Endothelial cell of umbilical vein (primary cell): ENCODE measurements at regions of chr2 and their contacts with region 1.

Region 1: GRCh38 chr2:78676921-78677696 is 348.4 kb upstream of the REG3G start:
- DNase-seq: no peak
- H3K4me3 ChIP-seq: no peak overlapping the region
- H3K27ac ChIP-seq: no peak overlapping the region
- H3K4me1 ChIP-seq: no peaks in the 10 kb centered on the region
- H3K27me3 ChIP-seq: no peaks in the 10 kb centered on the region
- CTCF ChIP-seq: no peak
- POLR2A ChIP-seq: no peak

Region 2: DNA sequence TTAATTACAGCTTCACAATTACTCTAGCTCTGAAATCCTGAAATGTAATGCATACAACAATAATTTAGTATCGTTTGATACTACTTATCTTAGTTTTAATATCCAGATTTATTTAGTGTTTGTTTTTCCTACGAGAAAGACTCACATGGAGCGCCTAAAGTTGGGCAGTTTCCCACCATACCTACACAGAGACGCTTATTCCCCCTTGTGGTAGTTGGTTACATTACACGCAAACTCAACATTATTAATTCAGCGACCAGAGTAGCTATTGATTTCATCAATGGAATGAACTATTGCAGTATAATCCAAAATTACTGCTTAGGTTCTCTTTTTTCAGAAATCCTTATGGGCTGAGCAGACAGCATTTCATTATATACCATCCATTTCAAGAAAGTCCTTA is 184.4 kb after region 1 on chr2:
- CTCF ChIA-PET with region 1: interaction called, 10 read pairs
- POLR2A ChIA-PET with region 1: no interaction called
- dilution Hi-C with region 1: no loop called
- intact Hi-C with region 1: loop called (anchors 1 kb)
- DNase-seq: peak; percentile 33
- H3K4me3 ChIP-seq: no peak overlapping the region
- H3K27ac ChIP-seq: no peak overlapping the region
- H3K4me1 ChIP-seq: no peaks in the 10 kb centered on the region
- H3K27me3 ChIP-seq: no peaks in the 10 kb centered on the region
- CTCF ChIP-seq: peak; percentile 31 to 44
- POLR2A ChIP-seq: no peak

Region 3: GRCh38 chr2:78999406-78999805 is 322.3 kb after region 1 on chr2:
- CTCF ChIA-PET with region 1: no interaction called
- POLR2A ChIA-PET with region 1: no interaction called
- dilution Hi-C with region 1: no loop called
- intact Hi-C with region 1: loop called (anchors 1 kb)
- DNase-seq: peak; percentile 26
- H3K4me3 ChIP-seq: no peak overlapping the region
- H3K27ac ChIP-seq: no peak overlapping the region
- H3K4me1 ChIP-seq: no peaks in the 10 kb centered on the region
- H3K27me3 ChIP-seq: peaks cover 3% of the 10 kb centered on the region in 2 experiments
- CTCF ChIP-seq: peak; percentile 10 to 30
- POLR2A ChIP-seq: no peak